Panc1 (cell line): ENCODE measurements at regions of chr4 and their contacts with region 1.

Region 1: DNA sequence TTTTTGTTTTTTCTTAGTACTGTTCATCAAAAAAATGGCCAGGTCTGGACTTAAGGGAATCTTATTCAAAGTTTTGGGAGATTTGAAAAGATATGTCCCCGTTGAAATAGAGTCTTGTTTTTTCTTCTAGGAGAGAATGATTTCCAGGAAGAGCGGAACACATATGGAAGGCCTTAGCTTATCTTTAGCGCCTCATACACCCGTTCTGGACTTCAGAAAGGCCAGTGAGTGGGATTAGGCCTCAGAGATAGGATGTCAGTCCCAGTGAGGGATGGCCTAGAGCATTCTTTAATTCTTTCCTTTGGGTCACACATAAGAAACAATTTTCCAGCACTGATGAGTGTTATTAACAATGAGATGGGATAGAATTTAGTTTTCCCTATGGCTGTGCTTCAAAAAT is 54.5 kb upstream of the HAND2 start:
- DNase-seq: no peak
- ATAC-seq: no peak
- H3K4me3 ChIP-seq: no peak overlapping the region
- H3K27ac ChIP-seq: no peak overlapping the region
- H3K4me1 ChIP-seq: no peaks in the 10 kb centered on the region
- H3K27me3 ChIP-seq: no peaks in the 10 kb centered on the region
- CTCF ChIP-seq: no peak

Region 2: GRCh38 chr4:172975651-172976229 is 608.8 kb before region 1 on chr4:
- CTCF ChIA-PET with region 1: no interaction called
- POLR2A ChIA-PET with region 1: interaction called, 10 read pairs
- in situ Hi-C with region 1: no loop called
- intact Hi-C with region 1: no loop called
- DNase-seq: no peak
- ATAC-seq: no peak
- H3K4me3 ChIP-seq: no peak overlapping the region
- H3K27ac ChIP-seq: no peak overlapping the region
- H3K4me1 ChIP-seq: no peaks in the 10 kb centered on the region
- H3K27me3 ChIP-seq: no peaks in the 10 kb centered on the region; the same call in 1 of the 2 replicates
- CTCF ChIP-seq: no peak

Region 3: GRCh38 chr4:173037242-173037641 is 547.3 kb before region 1 on chr4:
- CTCF ChIA-PET with region 1: no interaction called
- POLR2A ChIA-PET with region 1: no interaction called
- in situ Hi-C with region 1: no loop called
- intact Hi-C with region 1: no loop called
- DNase-seq: no peak
- ATAC-seq: no peak
- H3K4me3 ChIP-seq: no peak overlapping the region
- H3K27ac ChIP-seq: no peak overlapping the region; the same call in 1 of the 2 replicates
- H3K4me1 ChIP-seq: peaks cover 22% of the 10 kb centered on the region
- H3K27me3 ChIP-seq: no peaks in the 10 kb centered on the region
- CTCF ChIP-seq: no peak

Region 4: GRCh38 chr4:173257732-173258717 is 326.5 kb before region 1 on chr4:
- CTCF ChIA-PET with region 1: no interaction called
- POLR2A ChIA-PET with region 1: no interaction called
- in situ Hi-C with region 1: no loop called
- intact Hi-C with region 1: no loop called
- DNase-seq: peak; percentile 60
- ATAC-seq: peak; percentile 93
- H3K4me3 ChIP-seq: no peak overlapping the region
- H3K27ac ChIP-seq: peak overlapping the region; percentile 98
- H3K4me1 ChIP-seq: peaks cover 47% of the 10 kb centered on the region
- H3K27me3 ChIP-seq: no peaks in the 10 kb centered on the region
- CTCF ChIP-seq: peak; percentile 80

Region 5: GRCh38 chr4:173334085-173334772 is 250.3 kb before region 1 on chr4 and contains the start of gene HMGB2:
- CTCF ChIA-PET with region 1: no interaction called
- POLR2A ChIA-PET with region 1: no interaction called
- in situ Hi-C with region 1: no loop called
- intact Hi-C with region 1: no loop called
- DNase-seq: peak; percentile 98
- ATAC-seq: peak; percentile 90
- H3K4me3 ChIP-seq: peak within 1 kb of the TSS; percentile 86 to 91
- H3K27ac ChIP-seq: peak within 1 kb of the TSS; percentile 97
- H3K4me1 ChIP-seq: peaks cover 11% of the 10 kb centered on the region; the same call in 1 of the 2 replicates
- H3K27me3 ChIP-seq: no peaks in the 10 kb centered on the region
- CTCF ChIP-seq: no peak
- total RNA-seq, gene HMGB2: 183 TPM